HCT116 (cell line): ENCODE measurements at regions of chr12 and their contacts with region 1.

Region 1: DNA sequence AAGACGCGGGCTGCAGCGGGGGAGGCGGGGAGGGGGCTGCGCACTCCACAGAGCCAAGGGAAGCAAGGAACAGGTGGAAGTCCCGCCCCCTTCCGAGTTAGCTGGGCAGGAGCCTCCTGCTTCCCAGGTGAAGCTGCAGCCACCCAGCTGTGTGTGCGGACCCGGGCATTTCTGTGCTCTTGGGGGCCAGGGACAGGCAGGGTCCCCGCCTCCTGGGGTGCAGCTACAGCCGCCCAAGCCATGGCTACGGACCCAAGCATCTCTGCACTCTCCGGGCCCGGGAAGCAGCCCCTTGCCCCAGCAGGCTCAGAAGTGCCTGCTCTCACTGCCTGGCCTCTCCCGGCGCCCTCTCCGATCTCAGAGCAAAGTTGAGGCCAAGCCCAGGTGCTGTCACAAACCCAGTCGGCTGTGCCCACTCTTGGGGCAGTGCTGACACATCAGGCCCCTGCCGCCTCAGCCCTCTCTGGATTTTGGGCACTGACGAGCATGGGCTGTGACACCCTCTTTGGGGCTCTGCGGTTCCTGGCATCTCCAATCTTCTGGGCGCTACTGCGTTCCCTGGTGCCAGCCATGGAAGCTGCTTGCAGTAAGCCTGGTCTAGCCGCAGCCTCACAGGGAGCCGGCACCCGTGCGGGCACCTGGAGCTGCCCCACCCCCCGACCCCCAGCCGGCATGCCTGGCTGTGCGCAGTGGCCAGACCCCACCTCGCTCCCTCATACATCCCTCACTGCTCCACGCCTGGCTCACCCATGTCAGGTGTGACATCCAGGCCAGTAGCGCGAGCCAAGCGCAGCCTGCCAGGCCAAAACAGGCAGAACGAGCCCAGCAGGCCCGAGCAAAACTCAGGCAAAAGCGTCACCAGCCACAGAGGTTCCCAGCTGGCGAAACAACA is 8.5 kb upstream of the MGAT4C start:
- DNase-seq: no peak
- ATAC-seq: no peak
- H3K4me3 ChIP-seq: no peak overlapping the region
- H3K27ac ChIP-seq: no peak overlapping the region
- H3K4me1 ChIP-seq: no peaks in the 10 kb centered on the region
- H3K27me3 ChIP-seq: no peaks in the 10 kb centered on the region
- CTCF ChIP-seq: no peak
- POLR2A ChIP-seq: no peak
- RAD21 ChIP-seq: no peak

Region 2: DNA sequence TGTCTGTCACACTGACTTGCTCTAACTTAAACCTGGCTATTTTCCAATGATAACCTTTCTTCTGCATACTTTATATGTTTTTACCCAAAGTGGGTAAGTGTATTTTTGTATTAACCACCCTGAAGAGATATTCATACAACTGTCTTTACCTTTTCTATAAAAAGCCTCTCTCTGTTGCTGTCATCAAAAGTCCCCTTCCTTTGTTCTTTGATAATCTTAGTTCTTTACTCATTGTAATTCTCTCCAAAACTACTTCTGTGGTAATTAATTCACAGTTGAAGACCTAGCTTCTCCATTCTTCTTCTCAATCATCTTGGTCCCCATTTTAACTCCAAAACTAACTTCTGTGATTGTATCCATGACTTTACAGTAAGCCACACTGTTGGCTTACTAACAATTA is 471.2 kb after region 1 on chr12:
- CTCF ChIA-PET with region 1: no interaction called
- POLR2A ChIA-PET with region 1: no interaction called
- RAD21 ChIA-PET with region 1: no interaction called
- intact Hi-C with region 1: loop called (anchors 10 kb)
- DNase-seq: no peak
- ATAC-seq: no peak
- H3K4me3 ChIP-seq: no peak overlapping the region
- H3K27ac ChIP-seq: no peak overlapping the region
- H3K4me1 ChIP-seq: no peaks in the 10 kb centered on the region
- H3K27me3 ChIP-seq: no peaks in the 10 kb centered on the region
- CTCF ChIP-seq: no peak
- POLR2A ChIP-seq: no peak
- RAD21 ChIP-seq: no peak

Region 3: DNA sequence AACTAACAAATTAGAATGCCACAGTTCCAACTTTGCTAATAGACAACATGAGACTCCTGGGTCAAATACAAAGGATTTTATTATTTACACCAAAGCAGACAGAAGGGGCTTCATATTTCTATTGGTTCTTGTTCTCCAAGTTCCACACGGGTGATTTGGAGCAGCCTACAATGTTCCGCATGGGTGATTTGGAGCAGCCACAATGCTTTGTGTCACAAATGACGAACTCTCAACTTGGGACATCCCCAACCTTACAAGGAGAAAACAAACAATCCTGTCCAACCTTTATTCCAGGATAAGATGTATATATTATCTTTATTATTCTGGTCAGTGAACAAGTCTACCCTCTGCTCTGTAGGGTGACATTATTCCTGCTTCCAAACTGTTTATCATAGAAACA is 685.7 kb after region 1 on chr12:
- CTCF ChIA-PET with region 1: no interaction called
- POLR2A ChIA-PET with region 1: no interaction called
- RAD21 ChIA-PET with region 1: no interaction called
- intact Hi-C with region 1: no loop called
- DNase-seq: no peak
- ATAC-seq: no peak
- H3K4me3 ChIP-seq: no peak overlapping the region
- H3K27ac ChIP-seq: no peak overlapping the region
- H3K4me1 ChIP-seq: no peaks in the 10 kb centered on the region
- H3K27me3 ChIP-seq: no peaks in the 10 kb centered on the region
- CTCF ChIP-seq: no peak
- POLR2A ChIP-seq: no peak
- RAD21 ChIP-seq: no peak

Region 4: GRCh38 chr12:87853448-87854003 is 1588.8 kb after region 1 on chr12:
- CTCF ChIA-PET with region 1: no interaction called
- POLR2A ChIA-PET with region 1: no interaction called
- RAD21 ChIA-PET with region 1: no interaction called
- intact Hi-C with region 1: loop called (anchors 10 kb)
- DNase-seq: no peak
- ATAC-seq: no peak
- H3K4me3 ChIP-seq: no peak overlapping the region
- H3K27ac ChIP-seq: no peak overlapping the region
- H3K4me1 ChIP-seq: no peaks in the 10 kb centered on the region
- H3K27me3 ChIP-seq: no peaks in the 10 kb centered on the region
- CTCF ChIP-seq: no peak
- POLR2A ChIP-seq: no peak
- RAD21 ChIP-seq: no peak